ENCODE measurements at regions of chr2 and their contacts with region 1.

Region 1: GRCh38 chr2:25673300-25674076 is at the start of gene DTNB:
- DNase-seq: no peak
- ATAC-seq: peak; percentile 77
- H3K4me3 ChIP-seq: peak within 1 kb of the TSS; percentile 85
- H3K27ac ChIP-seq: no peak within 1 kb of the TSS
- H3K4me1 ChIP-seq: peaks cover 10% of the 10 kb centered on the region
- H3K27me3 ChIP-seq: peaks cover 0 to 3% of the 10 kb centered on the region in 2 experiments; a peak in 1 of 4 replicates
- CTCF ChIP-seq: no peak
- EP300 ChIP-seq: no peak
- POLR2A ChIP-seq: peak; percentile 80
- RAD21 ChIP-seq: no peak
- polyA plus RNA-seq, gene DTNB: 23.9 to 30.6 TPM

Region 2: DNA sequence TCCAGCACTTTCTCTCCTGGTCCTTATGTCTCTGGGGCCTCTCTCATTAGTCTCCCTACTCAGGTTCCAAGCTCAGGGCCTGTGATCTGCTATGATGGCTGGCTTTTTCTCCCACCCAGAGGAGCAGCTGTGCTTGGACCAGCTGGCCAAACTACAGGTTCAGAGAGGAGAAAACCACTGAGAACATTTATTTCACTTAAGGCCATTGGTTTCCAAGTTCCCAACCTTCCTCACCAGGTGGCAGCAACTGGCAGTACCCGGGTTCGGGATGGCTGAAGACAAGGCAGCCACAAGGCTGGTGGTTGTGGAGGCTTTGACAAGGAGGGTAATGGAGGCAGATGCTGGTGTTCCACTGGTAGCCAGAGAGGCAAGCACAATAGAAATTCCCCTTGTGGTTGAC is 642.6 kb after region 1 on chr2:
- CTCF ChIA-PET with region 1: no interaction called
- POLR2A ChIA-PET with region 1: interaction called, 10 read pairs
- RAD21 ChIA-PET with region 1: no interaction called
- SMC1A ChIA-PET with region 1: no interaction called
- in situ Hi-C with region 1: no loop called
- intact Hi-C with region 1: no loop called
- DNase-seq: no peak
- ATAC-seq: peak; percentile 71; the same call in 2 of the 3 replicates
- H3K4me3 ChIP-seq: no peak overlapping the region
- H3K27ac ChIP-seq: no peak overlapping the region
- H3K4me1 ChIP-seq: peaks cover 2% of the 10 kb centered on the region; the same call in 1 of the 2 replicates
- H3K27me3 ChIP-seq: no peaks in the 10 kb centered on the region; a peak in 1 of 4 replicates
- CTCF ChIP-seq: peak in 1 of 3 experiments; percentile 24; a peak in 1 of 6 replicates
- EP300 ChIP-seq: no peak
- POLR2A ChIP-seq: no peak
- RAD21 ChIP-seq: no peak; the same call in 1 of the 2 replicates